Heart left ventricle (tissue), 16 donors: ENCODE measurements at regions of chr5 and their contacts with region 1.

Region 1: DNA sequence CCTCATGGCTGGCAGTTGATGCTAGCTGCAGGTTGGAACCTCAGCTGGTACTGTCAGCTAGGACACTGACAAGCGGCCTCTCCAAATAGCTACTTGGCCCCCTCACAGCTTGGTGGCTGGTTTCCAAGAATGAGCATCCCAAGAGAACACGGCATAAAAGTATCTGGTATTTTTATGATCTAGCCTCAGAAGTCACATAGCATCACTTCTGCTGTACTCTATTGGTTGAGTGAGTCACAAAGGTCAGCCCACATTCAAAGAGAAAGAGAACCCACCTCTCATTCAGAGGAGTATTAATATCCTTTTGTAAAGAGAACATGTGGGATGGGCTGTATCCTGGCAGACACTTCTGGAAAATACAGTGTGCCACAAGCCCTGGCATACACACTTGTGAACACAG is 6.0 kb upstream of the SIL1 start:
- DNase-seq: no peak
- ATAC-seq: no peak
- H3K4me3 ChIP-seq: no peak overlapping the region
- H3K27ac ChIP-seq: no peak overlapping the region
- H3K4me1 ChIP-seq: peaks cover 0 to 9% (median 0%) of the 10 kb centered on the region in 12 donors
- H3K27me3 ChIP-seq: no peaks in the 10 kb centered on the region
- CTCF ChIP-seq: no peak
- POLR2A ChIP-seq: no peak

Region 2: GRCh38 chr5:139104577-139105276 is 99.5 kb before region 1 on chr5:
- intact Hi-C with region 1: loop called in 1 of 10 experiments (anchors 5 kb)
- DNase-seq: peak in 4 of 5 donors; percentile 64 to 70 (median 66)
- ATAC-seq: peak; percentile 57 to 95 (median 94)
- H3K4me3 ChIP-seq: peak overlapping the region in 2 of 12 donors; percentile 11 to 23
- H3K27ac ChIP-seq: peak overlapping the region in 9 of 12 donors; percentile 6 to 83 (median 46)
- H3K4me1 ChIP-seq: peaks cover 0 to 41% (median 11%) of the 10 kb centered on the region in 12 donors
- H3K27me3 ChIP-seq: no peaks in the 10 kb centered on the region
- CTCF ChIP-seq: no peak
- POLR2A ChIP-seq: no peak